ENCODE measurements at regions of chr9 and their contacts with region 1.

Region 1: GRCh38 chr9:19456996-19457692 is 48.3 kb downstream of the ACER2 start:
- DNase-seq: peak; percentile 37 to 61
- ATAC-seq: peak; percentile 89 to 100 (median 96)
- H3K4me3 ChIP-seq: peak overlapping the region; percentile 25
- H3K27ac ChIP-seq: no peak overlapping the region
- H3K4me1 ChIP-seq: peaks cover 8% of the 10 kb centered on the region
- H3K27me3 ChIP-seq: no peaks in the 10 kb centered on the region
- CTCF ChIP-seq: peak; percentile 98

Region 2: DNA sequence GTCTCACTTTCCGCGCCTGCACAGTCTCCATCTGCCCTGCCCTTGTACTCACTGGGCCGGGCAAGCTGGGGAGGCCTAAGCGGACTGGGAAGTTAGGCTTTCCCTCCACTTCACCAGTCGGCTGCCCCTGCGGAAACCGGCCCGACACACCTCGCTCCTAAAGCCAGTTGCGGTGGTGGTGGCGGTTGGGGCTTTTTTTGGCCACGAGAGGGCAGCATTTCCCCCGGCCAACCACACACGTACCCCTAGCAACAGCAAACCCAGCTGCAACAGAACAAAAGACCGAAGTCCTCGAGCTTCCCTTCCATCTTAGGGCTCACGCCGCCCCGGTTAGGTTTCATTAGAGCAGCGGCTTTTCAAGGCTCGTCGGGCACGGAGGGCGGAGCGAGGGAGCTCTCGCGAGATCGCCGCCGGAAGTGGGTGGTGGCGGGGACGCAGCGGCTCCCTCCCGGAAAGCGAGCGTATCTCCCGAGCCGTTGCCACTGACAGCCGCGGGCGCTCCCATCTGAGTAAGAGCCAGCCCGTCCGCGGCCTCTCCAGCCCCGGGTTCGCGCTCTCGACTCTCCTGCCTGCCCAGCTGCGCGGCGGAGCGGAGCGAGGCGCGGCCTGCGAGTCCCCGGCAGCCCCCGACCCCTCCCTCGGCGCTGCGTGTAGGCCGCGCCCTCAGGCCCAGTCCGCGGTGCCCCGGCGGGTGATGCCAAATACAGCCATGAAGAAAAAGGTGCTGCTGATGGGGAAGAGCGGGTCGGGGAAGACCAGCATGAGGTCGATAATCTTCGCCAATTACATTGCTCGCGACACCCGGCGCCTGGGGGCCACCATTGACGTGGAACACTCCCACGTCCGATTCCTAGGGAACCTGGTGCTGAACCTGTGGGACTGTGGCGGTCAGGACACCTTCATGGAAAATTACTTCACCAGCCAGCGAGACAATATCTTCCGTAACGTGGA is 407.9 kb before region 1 on chr9 and contains the start of gene RRAGA:
- intact Hi-C with region 1: loop called (anchors 5 to 10 kb)
- DNase-seq: peak; percentile 95 to 97
- ATAC-seq: peak; percentile 95 to 97 (median 96)
- H3K4me3 ChIP-seq: peak within 1 kb of the TSS; percentile 94
- H3K27ac ChIP-seq: peak within 1 kb of the TSS; percentile 97
- H3K4me1 ChIP-seq: peaks cover 29% of the 10 kb centered on the region
- H3K27me3 ChIP-seq: no peaks in the 10 kb centered on the region
- CTCF ChIP-seq: peak; percentile 87
- total RNA-seq, gene RRAGA: 88.3 to 107 (median 94.2) TPM

Region 3: DNA sequence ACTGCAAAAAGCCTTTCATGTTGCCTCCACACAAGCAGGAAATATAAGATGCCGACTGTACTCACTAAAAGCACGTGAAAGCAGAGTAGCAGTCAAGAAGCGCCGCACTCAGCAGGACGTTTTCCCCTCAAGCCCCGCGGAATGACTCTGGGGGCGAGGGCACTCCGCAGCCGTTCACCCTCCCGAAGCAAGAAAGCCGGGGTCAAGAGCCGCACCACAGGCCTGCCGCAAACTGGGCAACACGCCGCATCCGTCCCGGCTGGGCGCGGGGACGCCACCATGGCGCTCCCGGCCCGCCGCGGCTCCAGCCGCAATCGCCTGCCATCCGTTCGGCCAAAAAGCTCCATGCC is 77.5 kb before region 1 on chr9:
- intact Hi-C with region 1: loop called (anchors 5 kb)
- DNase-seq: peak in 1 of 2 donors; percentile 71
- ATAC-seq: peak; percentile 47 to 72 (median 54)
- H3K4me3 ChIP-seq: peak overlapping the region; percentile 83
- H3K27ac ChIP-seq: peak overlapping the region; percentile 93
- H3K4me1 ChIP-seq: peaks cover 14% of the 10 kb centered on the region
- H3K27me3 ChIP-seq: no peaks in the 10 kb centered on the region
- CTCF ChIP-seq: no peak

Region 4: GRCh38 chr9:19424176-19424779 is 32.9 kb before region 1 on chr9:
- intact Hi-C with region 1: no loop called
- DNase-seq: no peak
- ATAC-seq: no peak
- H3K4me3 ChIP-seq: no peak overlapping the region
- H3K27ac ChIP-seq: no peak overlapping the region
- H3K4me1 ChIP-seq: no peaks in the 10 kb centered on the region
- H3K27me3 ChIP-seq: no peaks in the 10 kb centered on the region
- CTCF ChIP-seq: no peak